Ovary (tissue), 10 donors: ENCODE measurements at regions of chr7 and their contacts with region 1.

Region 1: DNA sequence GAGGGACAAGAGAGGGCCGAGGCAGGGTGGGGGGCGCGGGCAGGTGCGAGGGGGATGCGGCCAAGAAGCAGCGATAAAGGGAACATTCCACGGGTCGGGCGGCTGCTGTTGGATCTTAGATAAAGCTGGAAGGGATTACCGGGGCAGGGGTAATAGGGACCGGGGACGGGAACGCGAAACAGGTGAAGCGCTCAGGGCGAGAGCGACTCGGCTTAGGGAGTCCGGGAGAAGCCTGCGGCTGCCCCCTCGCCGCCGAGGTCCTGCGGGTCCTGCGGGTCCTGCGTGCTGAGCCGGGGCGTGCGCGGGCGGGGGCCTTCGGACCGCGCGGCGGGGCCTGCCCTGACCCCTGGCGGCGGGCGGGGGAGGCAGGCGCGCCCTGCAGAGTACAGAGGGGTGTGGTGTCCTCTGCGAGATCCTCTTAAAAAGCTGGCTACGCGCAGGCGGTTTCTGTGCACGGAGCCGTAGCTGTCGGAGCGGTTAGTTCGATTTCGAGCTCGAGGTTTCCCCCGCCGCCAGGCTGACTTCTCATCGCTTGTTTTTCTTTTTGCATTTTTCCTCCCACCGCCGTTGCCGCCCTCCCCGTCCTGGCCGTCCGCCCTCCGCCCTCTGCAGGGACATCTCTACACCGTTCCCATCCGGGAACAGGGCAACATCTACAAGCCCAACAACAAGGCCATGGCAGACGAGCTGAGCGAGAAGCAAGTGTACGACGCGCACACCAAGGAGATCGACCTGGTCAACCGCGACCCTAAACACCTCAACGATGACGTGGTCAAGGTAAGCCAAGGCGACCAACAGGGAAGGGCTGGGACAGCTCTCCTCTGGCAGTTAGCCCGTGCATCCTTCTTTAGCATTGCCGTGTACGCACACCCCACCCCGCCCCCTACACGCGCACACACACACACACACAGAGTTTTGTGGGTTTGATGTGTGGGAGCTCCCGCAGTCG is 1.4 kb downstream of the CAV1 start:
- DNase-seq: peak; percentile 78 to 89 (median 82)
- H3K4me3 ChIP-seq: peak overlapping the region; percentile 80
- H3K27ac ChIP-seq: peak overlapping the region; percentile 54 to 73
- H3K4me1 ChIP-seq: peaks cover 9% of the 10 kb centered on the region
- H3K27me3 ChIP-seq: no peaks in the 10 kb centered on the region
- CTCF ChIP-seq: peak; percentile 57 to 83 (median 77)
- EP300 ChIP-seq: no peak
- POLR2A ChIP-seq: no peak

Region 2: GRCh38 chr7:116265881-116266280 is 260.3 kb before region 1 on chr7:
- intact Hi-C with region 1: loop called in 3 of 4 experiments (anchors 5 to 10 kb)
- DNase-seq: no peak
- H3K4me3 ChIP-seq: no peak overlapping the region
- H3K27ac ChIP-seq: no peak overlapping the region
- H3K4me1 ChIP-seq: peaks cover 6% of the 10 kb centered on the region
- H3K27me3 ChIP-seq: no peaks in the 10 kb centered on the region
- CTCF ChIP-seq: no peak
- EP300 ChIP-seq: no peak
- POLR2A ChIP-seq: no peak

Region 3: GRCh38 chr7:116354546-116355408 is 171.4 kb before region 1 on chr7:
- intact Hi-C with region 1: loop called in 1 of 4 experiments (anchors 5 kb)
- DNase-seq: peak; percentile 69 to 79 (median 74)
- H3K4me3 ChIP-seq: no peak overlapping the region
- H3K27ac ChIP-seq: peak overlapping the region in 1 of 2 donors; percentile 71
- H3K4me1 ChIP-seq: peaks cover 24% of the 10 kb centered on the region
- H3K27me3 ChIP-seq: no peaks in the 10 kb centered on the region
- CTCF ChIP-seq: no peak
- EP300 ChIP-seq: no peak
- POLR2A ChIP-seq: no peak

Region 4: DNA sequence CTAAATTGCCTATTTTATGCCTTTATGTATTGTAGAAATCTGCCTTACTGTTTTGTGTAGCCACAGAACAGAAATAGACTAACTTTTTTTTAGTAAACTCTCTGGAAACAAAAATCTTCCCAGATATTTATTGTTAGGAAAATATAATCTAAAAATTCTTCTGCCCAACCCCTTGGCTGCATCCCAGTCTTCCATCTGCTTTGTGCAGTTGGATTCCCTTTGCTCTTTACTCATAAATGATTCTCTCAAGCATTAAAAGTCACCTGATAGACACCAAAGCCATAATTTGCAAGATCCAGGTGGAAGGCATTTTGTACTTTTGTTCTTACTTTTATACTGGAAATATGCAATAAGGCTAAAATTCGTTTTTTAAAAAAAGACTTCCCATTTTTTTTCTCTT is 32.7 kb before region 1 on chr7:
- intact Hi-C with region 1: loop called in 1 of 4 experiments (anchors 2 kb)
- DNase-seq: peak in 1 of 5 donors; percentile 34
- H3K4me3 ChIP-seq: no peak overlapping the region
- H3K27ac ChIP-seq: peak overlapping the region in 1 of 2 donors; percentile 32
- H3K4me1 ChIP-seq: peaks cover 3% of the 10 kb centered on the region
- H3K27me3 ChIP-seq: no peaks in the 10 kb centered on the region
- CTCF ChIP-seq: no peak
- EP300 ChIP-seq: no peak
- POLR2A ChIP-seq: no peak